Thyroid gland (tissue), 4 donors: ENCODE measurements at regions of chr1 and their contacts with region 1.

Region 1: GRCh38 chr1:167442124-167442848 is 76.0 kb downstream of the CD247 start:
- DNase-seq: peak; percentile 81 to 87
- H3K4me3 ChIP-seq: no peak overlapping the region
- H3K27ac ChIP-seq: no peak overlapping the region
- H3K4me1 ChIP-seq: peaks cover 3 to 6% of the 10 kb centered on the region in 2 donors
- H3K27me3 ChIP-seq: no peaks in the 10 kb centered on the region
- CTCF ChIP-seq: peak; percentile 54 to 85 (median 76)
- POLR2A ChIP-seq: no peak

Region 2: GRCh38 chr1:167263819-167264464 is 178.3 kb before region 1 on chr1:
- intact Hi-C with region 1: loop called (anchors 10 kb)
- DNase-seq: no peak
- H3K4me3 ChIP-seq: no peak overlapping the region
- H3K27ac ChIP-seq: no peak overlapping the region
- H3K4me1 ChIP-seq: peaks cover 12 to 36% of the 10 kb centered on the region in 2 donors
- H3K27me3 ChIP-seq: no peaks in the 10 kb centered on the region
- CTCF ChIP-seq: no peak
- POLR2A ChIP-seq: no peak

Region 3: DNA sequence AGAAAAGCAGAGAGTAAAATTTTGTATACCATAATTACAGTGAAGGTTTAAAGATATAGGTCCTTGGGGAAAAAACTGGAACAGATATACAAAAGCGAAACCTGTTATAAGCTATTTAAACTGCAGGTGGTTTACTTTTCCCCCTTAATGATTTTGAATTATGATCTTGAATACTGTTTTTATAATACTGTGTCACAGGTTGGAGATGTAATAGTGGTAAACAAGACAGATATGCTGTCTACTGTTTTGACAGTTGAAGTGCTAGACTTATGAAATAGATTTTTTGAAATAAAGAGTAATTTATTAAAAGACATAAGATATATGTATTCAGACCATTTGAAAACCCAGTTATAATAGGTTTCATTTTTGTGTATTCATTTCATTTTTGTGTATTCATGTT is 53.3 kb before region 1 on chr1:
- intact Hi-C with region 1: no loop called
- DNase-seq: no peak
- H3K4me3 ChIP-seq: no peak overlapping the region
- H3K27ac ChIP-seq: no peak overlapping the region
- H3K4me1 ChIP-seq: no peaks in the 10 kb centered on the region
- H3K27me3 ChIP-seq: no peaks in the 10 kb centered on the region
- CTCF ChIP-seq: no peak
- POLR2A ChIP-seq: no peak